ENCODE measurements at regions of chr1 and their contacts with region 1.

Region 1: GRCh38 chr1:110554871-110555801 is 36.2 kb upstream of the KCNA10 start:
- DNase-seq: peak in 34 of 35 experiments; percentile 13 to 72 (median 41)
- ATAC-seq: peak; percentile 86 to 97 (median 91)
- H3K4me3 ChIP-seq: peak overlapping the region in 1 of 2 donors; percentile 52
- H3K4me3 Mint-ChIP-seq: peak overlapping the region in 1 of 3 donors; percentile 62
- H3K27ac ChIP-seq: no peak overlapping the region
- H3K27ac Mint-ChIP-seq: no peak overlapping the region
- H3K4me1 ChIP-seq: peaks cover 0 to 9% of the 10 kb centered on the region in 2 experiments
- H3K4me1 Mint-ChIP-seq: peaks cover 4 to 6% (median 5%) of the 10 kb centered on the region in 3 donors
- H3K27me3 ChIP-seq: peaks cover 2 to 47% of the 10 kb centered on the region in 2 experiments
- H3K27me3 Mint-ChIP-seq: peaks cover 53 to 69% of the 10 kb centered on the region in 2 donors

Region 2: DNA sequence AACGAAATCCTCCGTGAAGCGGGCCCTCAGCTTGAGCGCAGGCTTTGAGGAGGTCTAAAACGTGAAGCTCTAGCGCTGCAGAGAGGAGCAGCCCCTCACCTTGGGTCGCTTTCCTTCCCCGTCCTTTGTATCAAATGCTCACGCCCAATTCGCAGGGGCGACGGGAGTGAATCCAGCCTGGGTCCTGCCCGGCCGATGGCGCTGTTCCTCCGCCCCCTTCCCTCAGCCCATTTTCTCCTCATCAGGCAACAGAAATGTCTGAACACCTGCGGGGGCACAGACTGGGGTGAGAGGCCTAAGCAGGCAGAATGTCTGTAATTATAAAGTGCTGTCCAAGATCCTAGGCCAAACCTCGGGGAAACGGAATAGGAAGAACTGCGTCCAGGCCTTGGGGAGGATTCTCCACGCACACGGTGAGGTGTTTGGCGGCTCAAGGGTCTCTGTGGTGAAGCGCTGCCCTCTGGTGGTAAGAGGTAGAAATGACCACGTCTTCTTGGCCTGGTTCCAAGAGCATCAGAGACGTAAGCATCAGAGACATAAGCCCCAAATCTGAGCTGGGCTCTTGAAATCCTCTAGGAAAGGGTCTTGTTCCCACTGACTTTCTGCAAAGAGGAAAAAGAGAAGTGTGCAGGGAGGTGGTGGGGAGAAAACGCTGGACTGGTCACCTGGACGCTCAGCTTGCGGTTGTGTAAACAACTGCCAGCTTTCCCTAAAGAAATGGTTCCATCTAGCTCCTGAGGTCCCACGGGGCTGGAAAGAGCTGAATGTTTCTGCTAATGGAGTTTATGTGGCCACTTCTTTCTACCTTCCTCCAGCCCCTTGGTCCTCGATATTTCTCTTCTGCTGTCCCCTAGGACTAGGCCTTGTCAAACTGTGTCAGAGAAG is 225.7 kb after region 1 on chr1:
- CTCF ChIA-PET with region 1: interaction called, 6 to 16 read pairs
- POLR2A ChIA-PET with region 1: no interaction called
- DNase-seq: peak; percentile 47 to 91 (median 67)
- ATAC-seq: peak; percentile 60 to 82 (median 67)
- H3K4me3 ChIP-seq: no peak overlapping the region
- H3K4me3 Mint-ChIP-seq: no peak overlapping the region
- H3K27ac ChIP-seq: no peak overlapping the region
- H3K27ac Mint-ChIP-seq: no peak overlapping the region
- H3K4me1 ChIP-seq: peaks cover 11 to 38% of the 10 kb centered on the region in 2 experiments
- H3K4me1 Mint-ChIP-seq: peaks cover 41 to 53% (median 41%) of the 10 kb centered on the region in 3 donors
- H3K27me3 ChIP-seq: peaks cover 0 to 7% of the 10 kb centered on the region in 2 experiments
- H3K27me3 Mint-ChIP-seq: peaks cover 6 to 9% of the 10 kb centered on the region in 2 donors

Measured in T-cell (primary cell).